ENCODE measurements at regions of chr1 and their contacts with region 1.

Region 1: DNA sequence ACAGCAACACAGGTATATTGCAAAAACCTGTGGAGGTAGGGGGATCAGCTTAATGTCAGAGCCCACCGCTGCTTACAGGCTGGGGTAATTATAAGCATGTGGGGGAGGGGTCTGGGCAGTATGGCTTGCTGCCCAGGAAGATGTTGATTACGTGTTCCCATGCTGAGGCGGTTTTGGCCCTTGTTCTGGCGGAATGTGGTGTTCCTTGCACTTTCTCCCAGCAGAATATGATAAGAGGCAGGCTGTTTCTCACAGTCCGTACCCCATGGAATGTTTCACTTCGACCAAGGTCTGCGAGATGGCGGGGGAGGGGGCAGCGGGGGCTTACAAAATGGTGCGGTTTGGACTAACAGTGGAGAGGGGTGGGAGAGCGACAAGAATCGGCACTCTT is 9.8 kb upstream of the HPCAL4 start:
- DNase-seq: no peak
- H3K4me3 ChIP-seq: no peak overlapping the region
- H3K27ac ChIP-seq: no peak overlapping the region
- H3K4me1 ChIP-seq: peaks cover 0 to 17% of the 10 kb centered on the region in 2 experiments; a peak in 1 of 4 replicates
- H3K27me3 ChIP-seq: peaks cover 17% of the 10 kb centered on the region; the same call in 1 of the 2 replicates
- CTCF ChIP-seq: no peak
- EP300 ChIP-seq: no peak
- RAD21 ChIP-seq: no peak

Region 2: DNA sequence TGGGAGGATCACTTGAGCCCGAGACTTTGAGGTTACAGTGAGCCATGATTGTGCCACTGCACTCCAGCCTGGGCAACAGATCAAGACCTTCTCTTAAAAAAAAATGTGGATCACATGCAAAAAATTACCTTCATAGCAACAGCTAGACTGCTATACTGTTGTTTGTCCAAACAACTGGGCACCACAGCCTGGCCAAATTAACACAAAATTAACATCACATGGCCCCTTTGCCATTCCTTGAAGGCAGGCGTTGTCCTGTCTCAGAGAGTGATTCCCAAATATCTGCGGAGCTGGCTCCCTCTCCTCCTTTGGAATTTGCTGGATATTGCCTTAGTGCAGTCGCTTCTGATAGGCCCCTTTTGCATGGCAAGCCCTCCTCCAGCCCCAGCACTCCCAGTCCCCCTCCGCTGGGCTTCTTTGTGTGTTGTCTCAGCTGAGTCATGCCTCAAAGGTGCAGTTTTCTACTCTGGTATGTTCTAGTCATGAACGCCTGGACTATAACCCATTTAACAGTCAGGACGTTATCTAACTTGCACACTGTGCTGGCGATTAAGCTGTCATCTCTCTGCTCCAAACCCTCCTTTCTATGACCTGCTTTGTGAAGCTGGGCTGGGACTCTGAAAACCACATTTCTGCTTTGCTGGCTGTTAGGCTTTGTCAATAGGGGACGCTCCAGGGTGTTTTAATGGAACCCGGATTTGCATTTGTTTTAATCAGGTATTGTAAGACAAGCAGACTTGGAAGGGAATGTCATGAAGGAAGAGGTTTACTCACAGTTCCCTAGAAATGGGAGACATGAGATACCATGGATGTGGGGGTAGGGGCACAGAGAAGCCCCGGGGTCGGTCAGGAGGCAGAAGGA is 10.3 kb after region 1 on chr1:
- CTCF ChIA-PET with region 1: interaction called, 17 read pairs
- POLR2A ChIA-PET with region 1: no interaction called
- DNase-seq: no peak
- H3K4me3 ChIP-seq: no peak overlapping the region
- H3K27ac ChIP-seq: no peak overlapping the region
- H3K4me1 ChIP-seq: peaks cover 0 to 6% of the 10 kb centered on the region in 2 experiments; a peak in 1 of 4 replicates
- H3K27me3 ChIP-seq: peaks cover 15% of the 10 kb centered on the region
- CTCF ChIP-seq: no peak
- EP300 ChIP-seq: no peak
- RAD21 ChIP-seq: no peak

Region 3: GRCh38 chr1:39799770-39800470 is 98.9 kb after region 1 on chr1:
- CTCF ChIA-PET with region 1: interaction called, 12 read pairs
- POLR2A ChIA-PET with region 1: no interaction called
- DNase-seq: peak; percentile 92
- H3K4me3 ChIP-seq: peak overlapping the region in 1 of 2 experiments; percentile 33; a peak in 1 of 4 replicates
- H3K27ac ChIP-seq: no peak overlapping the region; a peak in 1 of 4 replicates
- H3K4me1 ChIP-seq: no peaks in the 10 kb centered on the region; a peak in 1 of 4 replicates
- H3K27me3 ChIP-seq: no peaks in the 10 kb centered on the region
- CTCF ChIP-seq: peak; percentile 86
- EP300 ChIP-seq: no peak
- RAD21 ChIP-seq: peak; percentile 63